Naive thymus-derived CD4-positive, alpha-beta T cell (primary cell): ENCODE measurements at regions of chr2 and their contacts with region 1.

Region 1: GRCh38 chr2:64873472-64873924 is 115.7 kb upstream of the SLC1A4 start:
- DNase-seq: peak; percentile 51 to 87 (median 71)
- ATAC-seq: peak; percentile 93
- H3K4me3 ChIP-seq: no peak overlapping the region
- H3K4me3 Mint-ChIP-seq: peak overlapping the region in 6 of 10 donors; percentile 25 to 64 (median 46)
- H3K27ac ChIP-seq: no peak overlapping the region
- H3K27ac Mint-ChIP-seq: peak overlapping the region in 2 of 9 donors; percentile 46 to 63
- H3K4me1 ChIP-seq: peaks cover 0 to 3% of the 10 kb centered on the region in 2 donors
- H3K4me1 Mint-ChIP-seq: peaks cover 0 to 7% (median 7%) of the 10 kb centered on the region in 7 donors
- H3K27me3 ChIP-seq: no peaks in the 10 kb centered on the region
- H3K27me3 Mint-ChIP-seq: peaks cover 0 to 24% (median 4%) of the 10 kb centered on the region in 5 donors

Region 2: GRCh38 chr2:64045938-64046337 is 827.6 kb before region 1 on chr2:
- CTCF ChIA-PET with region 1: no interaction called
- POLR2A ChIA-PET with region 1: no interaction called
- intact Hi-C with region 1: loop called (anchors 2 to 5 kb)
- DNase-seq: no peak
- ATAC-seq: no peak
- H3K4me3 ChIP-seq: no peak overlapping the region
- H3K4me3 Mint-ChIP-seq: no peak overlapping the region
- H3K27ac ChIP-seq: no peak overlapping the region
- H3K27ac Mint-ChIP-seq: no peak overlapping the region
- H3K4me1 ChIP-seq: peaks cover 3 to 9% of the 10 kb centered on the region in 2 donors
- H3K4me1 Mint-ChIP-seq: peaks cover 7 to 21% (median 13%) of the 10 kb centered on the region in 7 donors
- H3K27me3 ChIP-seq: no peaks in the 10 kb centered on the region
- H3K27me3 Mint-ChIP-seq: peaks cover 0 to 2% (median 0%) of the 10 kb centered on the region in 5 donors

Region 3: DNA sequence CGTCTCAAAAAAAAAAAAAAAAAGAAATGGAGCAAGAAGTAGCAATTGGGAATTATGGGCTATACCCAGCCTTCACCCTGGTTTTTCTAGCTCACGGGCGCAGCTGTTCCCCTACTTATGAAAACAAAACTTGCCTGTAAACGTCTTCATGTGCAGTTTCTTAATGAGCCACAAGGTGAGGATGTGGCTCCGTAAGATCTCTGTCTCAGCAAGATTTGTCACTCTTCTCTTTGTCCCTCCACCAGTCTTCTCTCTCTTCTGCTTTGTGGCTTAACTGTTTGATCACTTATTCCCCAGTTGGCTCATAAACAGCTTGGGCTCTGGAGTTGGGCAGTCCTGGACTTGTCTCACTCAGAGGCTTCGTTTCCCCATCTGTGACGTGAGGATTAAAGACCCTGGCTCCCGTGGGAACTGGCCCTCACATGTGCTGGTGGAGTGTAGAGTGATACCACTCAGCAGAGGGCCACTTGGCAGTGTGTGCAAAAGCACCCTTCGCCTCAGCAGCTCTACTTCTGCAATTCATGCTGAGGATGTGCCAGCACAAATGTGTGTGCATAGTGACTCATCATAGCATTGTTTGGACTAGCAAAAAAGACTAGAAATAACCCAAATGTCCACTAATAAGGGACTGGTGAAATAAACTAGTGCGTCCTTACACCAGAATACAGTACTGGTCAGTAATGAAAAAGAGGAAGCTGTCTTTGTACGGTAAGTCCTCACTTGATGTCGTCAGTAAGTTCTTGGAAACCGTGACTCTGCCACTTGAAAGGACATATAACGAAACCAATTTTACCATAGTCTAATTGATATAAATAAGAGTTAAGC is 191.4 kb after region 1 on chr2:
- CTCF ChIA-PET with region 1: no interaction called
- POLR2A ChIA-PET with region 1: no interaction called
- intact Hi-C with region 1: no loop called
- DNase-seq: peak in 7 of 9 donors; percentile 43 to 72 (median 56)
- ATAC-seq: peak; percentile 83
- H3K4me3 ChIP-seq: no peak overlapping the region
- H3K4me3 Mint-ChIP-seq: peak overlapping the region in 3 of 10 donors; percentile 3 to 41 (median 6)
- H3K27ac ChIP-seq: no peak overlapping the region
- H3K27ac Mint-ChIP-seq: peak overlapping the region in 6 of 9 donors; percentile 5 to 77 (median 40)
- H3K4me1 ChIP-seq: peaks cover 0 to 25% of the 10 kb centered on the region in 2 donors
- H3K4me1 Mint-ChIP-seq: peaks cover 21 to 65% (median 52%) of the 10 kb centered on the region in 7 donors
- H3K27me3 ChIP-seq: no peaks in the 10 kb centered on the region
- H3K27me3 Mint-ChIP-seq: no peaks in the 10 kb centered on the region